GM10248 (cell line): ENCODE measurements at regions of chr7 and their contacts with region 1.

Region 1: GRCh38 chr7:8560501-8560900 is 127.1 kb downstream of the NXPH1 start:
- DNase-seq: no peak
- CTCF ChIP-seq: no peak

Region 2: GRCh38 chr7:8549046-8549445 is 11.5 kb before region 1 on chr7:
- CTCF ChIA-PET with region 1: interaction called, 10 read pairs
- POLR2A ChIA-PET with region 1: no interaction called
- DNase-seq: no peak
- CTCF ChIP-seq: no peak

Region 3: GRCh38 chr7:8908893-8909292 is 348.4 kb after region 1 on chr7:
- CTCF ChIA-PET with region 1: no interaction called
- POLR2A ChIA-PET with region 1: no interaction called
- DNase-seq: no peak
- CTCF ChIP-seq: no peak